ENCODE measurements at regions of chr3 and their contacts with region 1.

Region 1: DNA sequence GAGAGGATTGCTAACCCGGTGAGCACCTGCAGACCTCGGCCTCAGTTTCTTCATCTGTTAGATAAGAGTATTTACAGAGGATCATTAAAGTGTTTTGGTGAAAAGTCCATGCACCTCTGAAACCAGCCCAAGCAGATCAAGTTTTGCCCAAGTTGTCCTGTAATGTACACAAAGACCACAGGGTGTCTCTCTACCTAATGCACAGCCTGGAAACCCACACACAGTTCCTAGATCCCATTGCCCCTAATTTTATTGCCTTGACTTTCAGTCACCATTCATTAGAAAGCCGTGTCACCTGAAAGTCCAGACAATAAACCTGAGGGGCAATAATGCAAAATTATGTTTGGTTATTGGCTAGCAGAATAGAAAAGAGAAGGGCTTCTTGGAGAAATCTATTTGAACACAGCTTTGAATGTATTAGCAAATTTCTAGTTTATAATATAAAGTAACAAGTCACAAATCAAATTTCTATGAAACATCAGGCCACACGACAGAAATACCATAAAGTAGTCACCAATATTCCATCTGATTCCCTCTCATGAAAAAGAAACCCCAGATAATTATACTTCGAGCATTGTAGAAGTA is 161.3 kb upstream of the SLC2A2 start:
- DNase-seq: peak; percentile 9 to 28
- ATAC-seq: peak in 1 of 2 experiments; percentile 82; a peak in 3 of 6 replicates
- H3K4me3 ChIP-seq: no peak overlapping the region
- H3K27ac ChIP-seq: no peak overlapping the region
- H3K4me1 ChIP-seq: peaks cover 23% of the 10 kb centered on the region
- CTCF ChIP-seq: peak; percentile 59
- EP300 ChIP-seq: no peak
- POLR2A ChIP-seq: no peak
- RAD21 ChIP-seq: peak; percentile 63 to 64

Region 2: GRCh38 chr3:170961616-170962400 is 226.0 kb before region 1 on chr3:
- CTCF ChIA-PET with region 1: interaction called, 14 read pairs
- POLR2A ChIA-PET with region 1: no interaction called
- DNase-seq: peak in 1 of 2 experiments; percentile 33
- ATAC-seq: peak in 1 of 2 experiments; percentile 45; a peak in 2 of 6 replicates
- H3K4me3 ChIP-seq: no peak overlapping the region
- H3K27ac ChIP-seq: peak overlapping the region; percentile 52 to 72
- H3K4me1 ChIP-seq: peaks cover 13% of the 10 kb centered on the region
- CTCF ChIP-seq: peak; percentile 81
- EP300 ChIP-seq: no peak
- POLR2A ChIP-seq: no peak
- RAD21 ChIP-seq: peak; percentile 77 to 94

Region 3: GRCh38 chr3:171218069-171218468 is 30.3 kb after region 1 on chr3:
- CTCF ChIA-PET with region 1: no interaction called
- POLR2A ChIA-PET with region 1: no interaction called
- DNase-seq: no peak
- ATAC-seq: no peak
- H3K4me3 ChIP-seq: no peak overlapping the region
- H3K27ac ChIP-seq: no peak overlapping the region
- H3K4me1 ChIP-seq: no peaks in the 10 kb centered on the region
- CTCF ChIP-seq: no peak
- EP300 ChIP-seq: no peak
- POLR2A ChIP-seq: no peak
- RAD21 ChIP-seq: no peak

Measured in A549 (cell line).